ENCODE measurements at regions of chr3 and their contacts with region 1.

Region 1: DNA sequence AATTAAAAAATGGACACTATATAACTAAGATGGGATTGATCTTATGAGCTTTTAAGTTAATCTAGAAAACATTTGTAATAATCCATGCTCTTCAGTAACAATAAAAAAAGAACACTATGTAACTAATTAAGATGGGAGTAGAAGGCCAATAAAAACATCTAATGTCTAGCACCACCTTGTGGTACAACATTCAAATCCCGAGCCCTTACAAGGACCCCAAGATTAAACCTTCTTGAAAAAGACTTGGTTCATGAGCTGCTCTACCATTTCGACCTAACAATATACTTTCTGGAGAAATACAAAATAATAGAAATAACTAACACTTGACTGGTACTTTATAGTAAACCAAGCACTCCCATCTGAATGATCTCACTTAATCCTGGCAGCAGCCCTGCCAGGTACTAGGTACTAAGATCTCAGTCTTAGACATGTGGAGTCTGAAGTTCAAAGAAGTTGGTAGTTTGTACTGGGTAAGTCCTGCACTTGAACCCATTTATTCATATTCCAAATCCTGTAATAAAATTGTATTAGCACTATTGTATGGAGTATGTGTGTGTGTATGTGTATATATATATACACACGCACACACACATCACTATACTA is 21.8 kb downstream of the METTL6 start:
- H3K4me3 ChIP-seq: no peak overlapping the region
- H3K27ac ChIP-seq: no peak overlapping the region
- H3K4me1 ChIP-seq: no peaks in the 10 kb centered on the region
- CTCF ChIP-seq: no peak

Region 2: DNA sequence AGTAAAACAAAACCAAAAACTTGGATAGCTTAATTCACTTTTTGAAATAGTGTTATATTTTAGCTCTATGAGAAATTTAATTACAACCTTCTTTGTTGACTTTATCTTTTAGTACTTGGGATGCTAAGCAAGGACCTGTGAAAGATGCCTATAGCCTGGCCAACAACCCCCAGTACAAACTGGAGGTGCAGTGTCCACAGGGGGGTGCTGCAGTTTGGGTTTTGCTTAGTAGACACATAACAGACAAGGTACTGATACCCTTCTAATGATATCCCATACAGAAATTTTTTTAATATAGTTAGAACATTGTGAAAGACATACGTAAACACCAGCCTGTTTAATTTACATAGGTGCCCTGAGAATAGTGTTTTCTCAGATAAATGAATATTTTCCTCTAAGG is 164.2 kb before region 1 on chr3:
- CTCF ChIA-PET with region 1: interaction called, 11 read pairs
- POLR2A ChIA-PET with region 1: no interaction called
- H3K4me3 ChIP-seq: no peak overlapping the region
- H3K27ac ChIP-seq: no peak overlapping the region
- H3K4me1 ChIP-seq: no peaks in the 10 kb centered on the region
- CTCF ChIP-seq: no peak

Region 3: GRCh38 chr3:15347063-15347736 is 58.3 kb before region 1 on chr3:
- CTCF ChIA-PET with region 1: no interaction called
- POLR2A ChIA-PET with region 1: no interaction called
- H3K4me3 ChIP-seq: no peak overlapping the region
- H3K27ac ChIP-seq: no peak overlapping the region
- H3K4me1 ChIP-seq: no peaks in the 10 kb centered on the region
- CTCF ChIP-seq: no peak

Region 4: DNA sequence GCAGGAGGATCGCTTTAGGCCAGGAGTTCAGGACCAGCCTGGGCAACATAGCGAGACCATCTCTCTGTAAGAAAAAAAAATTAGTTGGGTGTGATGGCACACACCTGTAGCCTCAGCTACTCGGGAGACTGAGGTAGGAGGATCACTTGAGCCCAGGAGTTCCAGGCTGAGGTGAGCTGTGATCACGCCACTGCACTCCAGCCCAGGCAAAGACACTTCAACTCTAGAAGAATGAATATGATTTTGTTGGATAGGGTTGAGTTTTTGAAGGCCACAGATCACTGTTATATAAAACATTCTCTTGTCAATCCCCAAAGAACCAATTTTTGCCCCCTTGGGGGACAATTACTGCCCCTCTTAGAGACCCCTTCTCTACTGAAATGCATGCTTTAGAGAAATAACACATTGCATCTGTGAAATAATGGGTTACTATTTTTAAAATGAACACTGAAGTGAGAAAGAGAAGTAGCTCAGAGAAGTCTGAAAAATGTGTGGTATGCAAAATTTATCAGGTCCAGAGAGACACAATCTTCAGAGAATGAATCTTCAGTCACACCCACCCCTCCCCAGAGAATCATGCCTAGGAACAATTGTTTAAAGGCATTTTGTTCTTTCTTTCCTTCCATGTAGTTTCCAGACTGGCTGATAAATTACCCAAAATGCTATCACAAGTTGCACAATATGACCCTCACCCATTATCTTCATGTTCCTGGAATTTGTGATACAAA is 20.9 kb before region 1 on chr3:
- CTCF ChIA-PET with region 1: interaction called, 10 read pairs
- POLR2A ChIA-PET with region 1: no interaction called
- H3K4me3 ChIP-seq: no peak overlapping the region
- H3K27ac ChIP-seq: no peak overlapping the region
- H3K4me1 ChIP-seq: no peaks in the 10 kb centered on the region
- CTCF ChIP-seq: no peak

Measured in HEK293 (cell line).